ENCODE measurements at regions of chr6 and their contacts with region 1.

Region 1: DNA sequence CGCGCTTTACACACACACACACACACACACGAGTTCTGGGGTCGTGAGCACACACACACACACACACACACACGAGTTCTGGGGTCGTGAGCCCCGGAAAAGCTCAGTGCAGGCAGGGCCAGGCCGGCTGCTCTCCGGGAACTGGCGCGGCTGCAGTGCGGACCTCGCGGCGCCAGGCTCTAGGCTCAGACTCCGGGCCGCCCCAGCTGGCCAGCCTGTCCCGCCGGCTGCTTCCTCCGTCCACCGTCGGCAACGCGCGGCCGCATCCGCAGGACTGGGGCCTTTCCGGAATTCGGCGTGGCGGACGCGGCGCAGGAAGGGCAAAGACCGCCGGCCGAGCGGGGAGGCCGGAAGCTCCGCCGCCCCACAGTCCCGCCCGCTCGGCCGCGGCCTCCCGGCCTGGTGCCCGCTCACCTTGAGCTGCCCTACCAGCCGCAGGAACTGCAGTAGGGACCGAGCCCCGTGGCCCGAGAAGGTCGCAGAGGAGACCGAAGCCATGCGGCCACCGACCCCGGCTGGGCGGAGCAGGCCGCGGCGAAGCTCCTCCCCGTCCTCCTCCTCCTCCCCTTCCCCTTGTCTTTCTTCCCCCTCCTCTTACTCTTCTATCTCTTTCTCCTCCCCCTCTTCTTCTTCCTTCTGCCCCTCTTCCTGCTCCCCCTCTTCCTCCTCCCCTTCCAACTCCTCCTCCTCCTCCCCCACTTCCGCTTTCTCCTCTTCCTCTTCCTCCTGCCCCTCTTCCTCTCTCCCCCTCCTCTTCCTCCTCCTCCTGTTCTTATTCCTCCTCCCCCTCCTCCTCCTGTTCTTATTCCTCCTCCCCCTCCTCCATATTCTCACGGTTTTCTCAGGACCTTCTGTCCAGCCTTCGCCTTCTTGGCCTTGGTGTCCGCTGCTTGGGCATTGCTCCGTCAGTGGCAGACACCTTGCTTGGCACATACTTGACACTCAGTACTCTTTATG is at the start of gene HDDC2:
- DNase-seq: peak; percentile 34 to 63
- H3K4me3 ChIP-seq: peak within 1 kb of the TSS; percentile 78 to 98 (median 88)
- H3K27ac ChIP-seq: peak within 1 kb of the TSS; percentile 91 to 97
- H3K4me1 ChIP-seq: peaks cover 0 to 11% of the 10 kb centered on the region in 2 donors
- H3K27me3 ChIP-seq: no peaks in the 10 kb centered on the region
- CTCF ChIP-seq: no peak
- POLR2A ChIP-seq: no peak
- total RNA-seq, gene HDDC2: 60.6 to 96.2 (median 88.1) TPM

Region 2: DNA sequence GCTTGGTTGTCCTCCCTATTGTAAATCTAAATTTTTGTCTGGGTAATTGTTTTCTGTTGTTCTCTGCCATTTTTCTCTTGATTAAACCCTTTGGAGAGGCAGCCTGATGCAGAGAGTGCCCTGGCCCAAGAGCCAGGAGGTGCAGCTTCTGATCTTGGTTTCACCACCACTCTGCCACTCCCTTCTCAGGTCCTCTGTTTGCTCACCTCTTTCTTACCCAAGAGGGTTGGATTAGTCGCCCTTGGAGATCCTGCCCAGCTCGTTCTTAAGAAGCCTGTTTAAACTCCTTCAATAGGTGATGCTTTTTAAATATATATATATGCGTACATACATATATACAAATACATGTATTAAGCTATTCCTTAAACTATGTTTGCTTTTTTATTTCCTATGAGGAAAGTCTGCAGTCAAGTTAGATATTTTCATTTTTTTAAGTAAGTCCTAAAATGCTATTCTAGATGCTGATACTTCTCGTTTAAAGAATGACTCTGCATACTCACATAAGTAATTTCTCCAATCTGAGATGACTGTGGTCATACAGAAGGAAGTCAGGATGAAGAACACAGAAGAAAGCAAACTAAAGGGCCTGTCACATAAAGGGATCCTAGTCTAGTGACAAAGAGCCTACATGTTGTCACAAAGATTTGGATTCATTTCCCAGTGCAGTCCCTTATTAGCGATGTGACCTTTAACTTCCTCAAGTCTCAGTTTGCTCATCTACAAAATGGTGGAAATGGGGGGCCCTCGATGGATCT is 128.2 kb before region 1 on chr6:
- intact Hi-C with region 1: no loop called
- DNase-seq: no peak
- H3K4me3 ChIP-seq: no peak overlapping the region
- H3K27ac ChIP-seq: no peak overlapping the region
- H3K4me1 ChIP-seq: no peaks in the 10 kb centered on the region
- H3K27me3 ChIP-seq: no peaks in the 10 kb centered on the region
- CTCF ChIP-seq: no peak
- POLR2A ChIP-seq: no peak

Region 3: GRCh38 chr6:125753218-125753936 is 451.7 kb after region 1 on chr6:
- intact Hi-C with region 1: loop called (anchors 10 kb)
- DNase-seq: no peak
- H3K4me3 ChIP-seq: no peak overlapping the region
- H3K27ac ChIP-seq: no peak overlapping the region
- H3K4me1 ChIP-seq: no peaks in the 10 kb centered on the region
- H3K27me3 ChIP-seq: no peaks in the 10 kb centered on the region
- CTCF ChIP-seq: peak in 2 of 3 donors; percentile 27 to 45
- POLR2A ChIP-seq: no peak

Measured in breast epithelium (tissue), 4 donors.